ENCODE measurements at regions of chr14 and their contacts with region 1.

Region 1: GRCh38 chr14:76918751-76919543 is 92.7 kb downstream of the LRRC74A start:
- DNase-seq: peak; percentile 96
- H3K4me3 ChIP-seq: no peak overlapping the region
- H3K27me3 ChIP-seq: no peaks in the 10 kb centered on the region
- CTCF ChIP-seq: no peak

Region 2: DNA sequence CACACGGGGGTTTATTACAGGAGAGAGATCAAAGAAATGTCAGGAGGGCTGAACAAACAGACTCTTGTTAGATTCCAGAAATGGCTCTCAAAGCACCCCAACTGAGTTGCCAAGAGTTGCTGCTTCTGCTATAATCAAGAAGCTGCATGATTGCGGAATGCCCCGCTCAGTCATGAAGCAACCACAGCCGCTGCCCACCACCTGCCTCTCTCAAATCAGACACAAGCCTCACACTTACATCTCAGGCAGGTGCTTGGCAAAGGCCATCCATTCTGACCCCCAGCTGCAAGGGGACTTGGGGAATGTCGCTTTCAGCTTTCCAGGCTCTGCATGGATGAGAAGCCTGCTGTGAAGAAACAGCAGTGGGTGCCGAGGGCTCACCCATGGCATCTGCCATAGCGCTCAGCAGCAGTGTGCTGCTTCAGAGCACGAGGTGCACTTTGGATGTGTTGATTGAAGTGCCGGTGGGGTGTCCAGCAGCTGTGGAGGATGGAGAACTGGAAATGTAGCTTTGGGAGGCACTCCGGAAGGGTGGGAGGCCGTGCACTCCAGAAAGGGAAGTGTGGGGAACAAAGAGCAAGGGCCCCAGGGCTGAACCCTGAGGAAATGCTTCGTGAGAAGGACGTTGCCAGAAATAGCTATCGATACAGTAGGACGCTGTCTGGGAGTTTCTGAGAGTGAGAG is 55.1 kb before region 1 on chr14:
- CTCF ChIA-PET with region 1: no interaction called
- POLR2A ChIA-PET with region 1: no interaction called
- DNase-seq: no peak
- H3K4me3 ChIP-seq: no peak overlapping the region
- H3K27me3 ChIP-seq: peaks cover 17% of the 10 kb centered on the region
- CTCF ChIP-seq: no peak

Region 3: GRCh38 chr14:76882651-76883050 is 36.3 kb before region 1 on chr14:
- CTCF ChIA-PET with region 1: interaction called, 70 read pairs
- POLR2A ChIA-PET with region 1: no interaction called
- DNase-seq: no peak
- H3K4me3 ChIP-seq: no peak overlapping the region
- H3K27me3 ChIP-seq: no peaks in the 10 kb centered on the region; the same call in 1 of the 2 replicates
- CTCF ChIP-seq: no peak

Region 4: GRCh38 chr14:76937181-76938091 is 18.5 kb after region 1 on chr14:
- CTCF ChIA-PET with region 1: interaction called, 13 read pairs
- POLR2A ChIA-PET with region 1: no interaction called
- DNase-seq: no peak
- H3K4me3 ChIP-seq: no peak overlapping the region
- H3K27me3 ChIP-seq: no peaks in the 10 kb centered on the region
- CTCF ChIP-seq: no peak

Region 5: DNA sequence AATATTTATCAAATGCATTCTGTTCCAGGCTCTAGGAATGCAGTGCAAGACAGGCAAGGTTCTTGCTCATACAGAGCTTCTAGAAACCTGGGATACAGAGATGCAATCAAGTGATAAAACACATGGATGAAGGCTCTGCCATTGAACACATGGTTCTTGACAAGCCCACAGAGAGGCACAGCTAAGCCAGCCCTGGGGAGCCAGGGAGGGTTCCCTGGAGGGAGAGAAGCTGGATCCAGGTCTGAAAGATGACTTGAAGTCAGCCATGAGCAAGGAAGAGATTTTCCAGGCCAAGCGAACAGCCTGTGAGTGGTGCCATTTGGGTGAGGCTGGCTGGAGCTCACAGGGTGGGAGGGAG is 43.3 kb after region 1 on chr14:
- CTCF ChIA-PET with region 1: interaction called, 15 read pairs
- POLR2A ChIA-PET with region 1: no interaction called
- DNase-seq: no peak
- H3K4me3 ChIP-seq: peak overlapping the region; percentile 25; the same call in 1 of the 2 replicates
- H3K27me3 ChIP-seq: no peaks in the 10 kb centered on the region
- CTCF ChIP-seq: no peak

Region 6: DNA sequence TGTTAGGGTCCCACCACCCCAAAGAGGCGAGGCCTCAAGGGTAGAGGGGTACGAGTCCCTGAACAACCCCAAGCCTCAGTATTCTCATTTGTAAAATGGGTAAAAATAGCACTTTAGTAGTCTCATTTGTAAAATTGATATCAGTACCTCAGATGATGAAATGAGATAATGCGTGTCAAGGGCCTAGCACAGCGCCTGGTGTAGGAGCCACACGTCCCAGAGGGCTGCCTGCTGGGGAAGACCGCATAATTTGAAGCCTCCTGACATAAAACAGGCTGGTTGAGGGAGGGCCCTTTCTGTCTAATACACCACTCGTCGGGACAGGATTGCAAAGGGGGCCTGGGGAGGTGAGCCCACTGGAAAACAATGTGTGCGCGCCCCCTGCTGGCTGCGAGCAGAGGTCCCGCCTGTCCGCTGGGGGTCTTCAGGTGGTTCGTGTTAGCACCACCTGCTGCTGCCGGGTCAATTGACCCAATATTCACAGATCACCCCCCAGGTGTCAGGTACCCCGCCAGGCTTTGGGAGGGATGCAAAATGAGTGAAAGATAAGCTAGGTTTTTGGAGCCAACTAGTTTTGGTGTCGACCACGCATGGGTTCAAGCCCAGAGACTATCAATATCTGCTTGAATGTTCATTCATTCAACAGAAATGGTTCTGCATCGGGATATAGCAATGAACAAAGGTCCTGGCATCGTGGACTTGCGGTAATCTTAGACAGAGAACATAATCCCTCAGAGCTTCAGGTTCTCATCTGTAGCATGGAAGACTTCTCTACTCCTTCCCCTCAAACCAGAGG is 134.3 kb after region 1 on chr14:
- CTCF ChIA-PET with region 1: interaction called, 316 read pairs
- POLR2A ChIA-PET with region 1: no interaction called
- DNase-seq: no peak
- H3K4me3 ChIP-seq: no peak overlapping the region
- H3K27me3 ChIP-seq: no peaks in the 10 kb centered on the region
- CTCF ChIP-seq: peak; percentile 90

Region 7: DNA sequence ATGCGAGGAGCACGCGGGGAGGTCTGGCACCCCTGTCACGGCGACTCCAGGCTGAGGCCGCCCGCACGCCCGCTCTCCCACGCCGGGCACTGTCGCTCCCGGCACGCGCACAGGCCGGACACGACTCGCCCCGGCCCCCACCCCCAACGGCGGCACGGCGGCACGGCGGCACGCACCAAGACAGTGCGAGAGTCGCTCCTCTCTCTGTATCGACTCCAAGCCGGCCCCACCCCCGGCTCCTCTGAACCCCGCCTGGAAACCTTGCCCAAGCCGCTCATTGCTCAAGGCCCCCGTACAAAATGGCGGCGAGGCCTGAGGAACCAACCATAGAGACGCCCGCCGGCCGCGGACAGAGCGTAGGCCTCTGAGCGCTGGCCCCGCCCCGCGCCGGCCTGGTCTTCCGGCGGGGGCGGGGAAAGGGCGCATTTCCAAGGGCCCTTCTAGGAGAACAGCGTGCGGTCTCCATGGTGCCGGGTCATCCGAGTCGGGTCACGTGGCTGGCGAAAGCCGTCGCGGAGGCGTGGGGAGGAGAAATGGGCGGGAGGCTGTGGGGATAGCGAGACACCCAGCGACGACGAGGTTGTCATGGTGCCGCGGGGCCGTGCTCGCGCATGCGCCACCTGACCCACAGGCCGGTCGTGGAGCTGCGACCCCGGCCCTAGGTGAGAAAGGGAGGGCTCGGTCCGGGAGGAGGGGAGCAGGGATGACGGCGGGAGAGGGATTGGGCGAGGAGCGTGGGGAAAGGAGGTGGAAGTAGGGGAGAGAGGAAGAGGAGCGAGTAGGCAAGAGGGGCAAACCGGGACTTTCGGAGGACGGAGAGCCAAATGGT is 179.0 kb after region 1 on chr14 and contains the start of gene CIPC:
- CTCF ChIA-PET with region 1: interaction called, 14 read pairs
- POLR2A ChIA-PET with region 1: no interaction called
- DNase-seq: peak; percentile 87
- H3K4me3 ChIP-seq: peak within 1 kb of the TSS; percentile 90
- H3K27me3 ChIP-seq: no peaks in the 10 kb centered on the region
- CTCF ChIP-seq: no peak
- polyA plus RNA-seq, gene CIPC: 14.2 and 15.5 TPM in 2 replicates

Region 8: DNA sequence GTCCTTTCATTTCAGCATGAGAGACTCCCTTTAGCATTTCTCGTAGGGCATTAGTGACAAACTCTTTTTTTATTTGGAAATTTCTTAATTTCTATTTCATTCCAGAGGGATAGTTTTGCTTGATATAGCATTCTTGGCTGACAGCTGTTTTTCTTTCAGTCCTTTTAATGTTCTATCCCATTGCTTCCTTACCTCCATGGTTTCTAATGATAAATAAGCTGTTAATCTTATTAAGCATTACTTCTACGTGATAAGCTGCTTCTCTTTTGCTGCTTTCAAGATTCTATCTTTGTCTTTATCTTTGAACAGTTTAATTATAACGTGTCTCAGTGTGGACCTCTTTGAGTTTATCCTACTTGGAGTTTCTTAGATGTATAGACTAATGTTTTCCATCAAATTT is 251.1 kb after region 1 on chr14:
- CTCF ChIA-PET with region 1: no interaction called
- POLR2A ChIA-PET with region 1: no interaction called
- DNase-seq: no peak
- H3K4me3 ChIP-seq: no peak overlapping the region
- H3K27me3 ChIP-seq: no peaks in the 10 kb centered on the region
- CTCF ChIP-seq: no peak